Common myeloid progenitor, CD34-positive (primary cell): ENCODE measurements at regions of chr16 and their contacts with region 1.

Region 1: DNA sequence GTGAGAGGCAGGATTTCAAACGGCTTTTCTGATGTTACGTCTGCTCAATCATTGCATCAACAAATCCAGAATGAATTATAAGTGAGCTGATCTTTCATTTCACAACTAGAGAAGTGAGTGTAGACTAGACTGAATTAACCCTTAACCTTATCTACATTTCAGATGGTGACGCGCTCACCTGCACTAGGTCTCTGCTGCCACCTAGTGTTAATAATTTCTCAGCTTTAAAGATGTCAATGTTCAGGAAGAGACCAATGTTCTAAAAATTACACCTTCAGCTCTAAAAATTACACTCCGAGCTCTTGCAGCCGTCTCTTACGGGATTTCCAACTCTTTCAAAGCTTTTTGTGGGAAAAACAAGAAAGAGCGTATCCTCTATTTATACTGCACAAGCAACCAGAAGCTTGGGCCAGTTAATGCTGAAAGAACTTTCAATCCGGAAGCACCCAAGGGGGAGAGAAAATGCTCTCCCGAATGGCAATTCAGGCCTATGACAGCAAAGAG is 88.2 kb upstream of the FA2H start:
- DNase-seq: peak; percentile 57 to 69 (median 66)
- H3K4me3 ChIP-seq: no peak overlapping the region
- H3K27ac ChIP-seq: no peak overlapping the region
- H3K4me1 ChIP-seq: peaks cover 0 to 8% (median 2%) of the 10 kb centered on the region in 4 experiments
- H3K27me3 ChIP-seq: no peaks in the 10 kb centered on the region

Region 2: DNA sequence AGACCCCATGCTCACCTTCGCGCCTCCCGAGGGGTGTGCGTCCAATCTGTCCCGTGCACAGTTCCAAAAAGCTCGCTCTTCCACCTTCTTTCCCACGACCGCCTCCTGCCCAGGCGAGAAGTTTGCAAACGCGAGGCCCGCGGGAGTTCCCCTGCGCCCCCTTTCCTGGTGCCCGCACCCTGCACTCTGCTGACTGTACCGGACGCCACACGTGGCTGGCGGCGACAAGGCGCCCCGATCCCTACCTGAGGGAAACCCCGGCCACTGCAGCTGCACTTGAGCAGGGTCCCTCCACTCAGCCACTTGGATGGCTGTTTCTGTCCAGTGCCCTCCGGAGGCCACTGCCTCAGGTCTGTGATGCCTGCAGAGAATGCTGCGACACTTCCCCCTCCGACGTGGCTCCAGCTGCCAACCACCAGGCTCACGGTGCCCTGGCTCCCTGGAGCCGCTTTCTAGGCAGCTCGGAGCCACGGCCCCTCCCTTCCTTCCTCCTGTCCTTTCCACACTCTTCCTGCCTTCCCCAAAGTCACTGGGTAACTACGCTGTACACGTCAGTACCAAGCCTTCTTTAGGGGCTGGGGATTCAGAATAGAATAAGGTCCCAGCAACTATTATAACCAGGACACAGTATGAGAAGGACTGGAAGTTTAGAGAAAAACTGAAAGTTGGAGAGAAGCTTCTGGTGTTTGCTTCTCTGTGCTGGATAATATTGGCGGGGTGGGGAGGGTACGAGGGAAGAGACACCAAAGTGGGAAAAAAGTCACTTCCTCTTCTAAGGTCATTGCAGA is 162.2 kb before region 1 on chr16 and contains the start of gene MLKL:
- CTCF ChIA-PET with region 1: interaction called, 13 read pairs
- POLR2A ChIA-PET with region 1: no interaction called
- DNase-seq: peak; percentile 64 to 90 (median 84)
- H3K4me3 ChIP-seq: peak within 1 kb of the TSS; percentile 55 to 97 (median 86)
- H3K27ac ChIP-seq: peak within 1 kb of the TSS; percentile 74 to 86
- H3K4me1 ChIP-seq: peaks cover 14 to 46% (median 33%) of the 10 kb centered on the region in 4 experiments
- H3K27me3 ChIP-seq: no peaks in the 10 kb centered on the region

Region 3: GRCh38 chr16:74726716-74727115 is 136.1 kb before region 1 on chr16:
- CTCF ChIA-PET with region 1: interaction called, 22 read pairs
- POLR2A ChIA-PET with region 1: no interaction called
- DNase-seq: peak in 1 of 3 donors; percentile 33
- H3K4me3 ChIP-seq: no peak overlapping the region
- H3K27ac ChIP-seq: no peak overlapping the region
- H3K4me1 ChIP-seq: peaks cover 9 to 32% (median 26%) of the 10 kb centered on the region in 4 experiments
- H3K27me3 ChIP-seq: no peaks in the 10 kb centered on the region

Region 4: GRCh38 chr16:74813109-74813641 is 49.6 kb before region 1 on chr16:
- CTCF ChIA-PET with region 1: interaction called, 61 read pairs
- POLR2A ChIA-PET with region 1: no interaction called
- DNase-seq: peak; percentile 75 to 80 (median 76)
- H3K4me3 ChIP-seq: peak overlapping the region in 2 of 7 experiments; percentile 8 to 48
- H3K27ac ChIP-seq: no peak overlapping the region
- H3K4me1 ChIP-seq: peaks cover 0 to 5% (median 1%) of the 10 kb centered on the region in 4 experiments
- H3K27me3 ChIP-seq: no peaks in the 10 kb centered on the region

Region 5: DNA sequence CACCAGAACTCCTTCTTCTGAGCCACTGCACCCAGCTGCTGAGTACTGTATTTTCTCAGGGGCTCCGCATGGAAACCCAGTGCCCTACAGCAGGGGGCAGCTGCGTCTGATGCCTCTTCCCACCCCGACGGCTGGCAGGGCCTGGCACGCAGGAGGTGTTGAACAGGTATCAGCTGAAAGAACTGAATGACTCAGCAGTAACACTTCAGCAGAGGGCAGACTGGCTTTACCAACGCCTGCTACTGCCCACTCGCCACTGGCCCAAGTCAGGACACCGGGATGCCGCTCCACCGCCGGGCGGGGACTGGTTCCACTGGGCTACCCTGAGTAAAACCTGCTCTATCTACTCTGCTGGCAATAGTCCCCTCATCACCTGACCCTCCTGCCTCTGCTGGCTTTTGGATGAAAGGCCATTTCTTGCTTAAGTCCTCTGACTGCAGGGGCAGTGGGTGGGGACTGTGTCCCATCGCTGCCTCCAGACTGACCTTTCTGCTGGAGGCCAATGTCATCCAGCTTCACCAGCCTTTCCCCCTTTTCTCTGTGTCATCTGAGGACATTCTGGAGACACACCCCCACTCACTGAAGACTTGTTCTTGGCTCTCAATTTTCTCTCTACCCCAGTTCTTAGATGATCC is 12.2 kb after region 1 on chr16:
- CTCF ChIA-PET with region 1: interaction called, 15 read pairs
- POLR2A ChIA-PET with region 1: interaction called, 3 read pairs
- DNase-seq: no peak
- H3K4me3 ChIP-seq: no peak overlapping the region
- H3K27ac ChIP-seq: no peak overlapping the region
- H3K4me1 ChIP-seq: no peaks in the 10 kb centered on the region
- H3K27me3 ChIP-seq: no peaks in the 10 kb centered on the region